AG04450 (cell line): ENCODE measurements at regions of chr22 and their contacts with region 1.

Region 1: GRCh38 chr22:28051787-28052356 is 132.8 kb upstream of the PITPNB start:
- DNase-seq: no peak
- H3K4me3 ChIP-seq: no peak overlapping the region
- H3K27ac ChIP-seq: no peak overlapping the region
- H3K27me3 ChIP-seq: no peaks in the 10 kb centered on the region
- CTCF ChIP-seq: peak; percentile 97

Region 2: DNA sequence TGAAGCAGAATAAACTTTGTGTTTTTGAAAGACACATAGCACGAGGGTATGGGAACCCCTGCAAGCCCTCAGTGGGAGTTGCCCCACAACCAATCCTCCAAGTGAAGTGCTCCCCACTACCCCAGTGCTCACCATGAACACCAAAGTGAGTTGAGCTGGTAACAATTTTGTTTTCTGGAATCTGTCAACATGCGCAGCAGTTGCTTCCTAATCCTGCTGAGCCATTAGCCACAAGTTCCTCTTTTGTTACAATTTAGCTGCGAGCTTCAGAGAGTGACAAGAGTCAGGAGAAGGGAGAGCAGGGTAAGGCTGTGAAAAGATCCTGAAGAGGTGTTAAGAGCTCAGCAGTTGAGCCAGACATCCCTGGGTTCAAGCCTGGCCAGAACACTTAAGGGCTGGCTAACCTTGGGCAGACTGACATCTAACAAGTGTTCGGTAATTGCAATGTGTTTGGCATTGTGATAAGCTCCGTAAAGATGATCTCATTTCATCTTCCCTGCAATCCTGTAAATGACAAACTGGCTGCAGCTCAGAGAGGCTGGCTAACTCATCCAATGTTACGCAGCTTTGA is 1646.9 kb before region 1 on chr22:
- CTCF ChIA-PET with region 1: no interaction called
- POLR2A ChIA-PET with region 1: no interaction called
- DNase-seq: no peak
- H3K4me3 ChIP-seq: no peak overlapping the region
- H3K27ac ChIP-seq: no peak overlapping the region
- H3K27me3 ChIP-seq: peaks cover 4% of the 10 kb centered on the region
- CTCF ChIP-seq: no peak

Region 3: GRCh38 chr22:27810609-27811151 is 241.2 kb before region 1 on chr22:
- CTCF ChIA-PET with region 1: no interaction called
- POLR2A ChIA-PET with region 1: no interaction called
- DNase-seq: peak; percentile 36
- H3K4me3 ChIP-seq: no peak overlapping the region
- H3K27ac ChIP-seq: peak overlapping the region; percentile 39
- H3K27me3 ChIP-seq: peaks cover 3% of the 10 kb centered on the region
- CTCF ChIP-seq: no peak

Region 4: DNA sequence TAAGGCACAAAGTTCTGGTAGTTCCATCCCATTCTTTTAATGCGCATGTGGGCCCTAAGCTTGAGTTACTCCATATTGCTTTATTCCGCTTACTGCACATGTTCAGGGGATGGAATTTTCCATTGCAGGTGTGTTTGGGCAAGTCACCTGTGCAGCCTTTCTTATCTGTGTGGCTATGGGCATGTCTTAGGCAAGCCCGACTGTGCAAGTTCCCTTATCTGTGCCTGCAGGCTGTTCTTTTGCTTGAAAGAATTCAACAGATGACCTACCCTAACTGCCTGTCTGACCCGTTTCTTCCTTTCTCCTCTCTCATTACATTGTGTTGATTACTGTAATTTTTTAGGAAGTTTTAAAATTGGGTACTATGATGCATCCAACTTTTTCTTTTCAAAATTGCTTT is 264.1 kb after region 1 on chr22:
- CTCF ChIA-PET with region 1: no interaction called
- POLR2A ChIA-PET with region 1: no interaction called
- DNase-seq: no peak
- H3K4me3 ChIP-seq: no peak overlapping the region
- H3K27ac ChIP-seq: no peak overlapping the region
- H3K27me3 ChIP-seq: no peaks in the 10 kb centered on the region
- CTCF ChIP-seq: no peak

Region 5: GRCh38 chr22:28410050-28410816 is 358.4 kb after region 1 on chr22:
- CTCF ChIA-PET with region 1: interaction called, 10 read pairs
- POLR2A ChIA-PET with region 1: no interaction called
- DNase-seq: no peak
- H3K4me3 ChIP-seq: no peak overlapping the region
- H3K27ac ChIP-seq: no peak overlapping the region
- H3K27me3 ChIP-seq: no peaks in the 10 kb centered on the region
- CTCF ChIP-seq: no peak